ENCODE measurements at regions of chr2 and their contacts with region 1.

Region 1: GRCh38 chr2:110157153-110157793 is 41.7 kb upstream of the MALL start:
- H3K4me3 ChIP-seq: no peak overlapping the region
- H3K27ac ChIP-seq: no peak overlapping the region
- H3K4me1 ChIP-seq: no peaks in the 10 kb centered on the region
- CTCF ChIP-seq: no peak

Region 2: GRCh38 chr2:110170102-110170501 is 12.8 kb after region 1 on chr2:
- CTCF ChIA-PET with region 1: interaction called, 12 read pairs
- POLR2A ChIA-PET with region 1: no interaction called
- H3K4me3 ChIP-seq: no peak overlapping the region
- H3K27ac ChIP-seq: no peak overlapping the region
- H3K4me1 ChIP-seq: no peaks in the 10 kb centered on the region
- CTCF ChIP-seq: no peak